Sciatic nerve (tissue), 2 donors: ENCODE measurements at regions of chr2 and their contacts with region 1.

Region 1: DNA sequence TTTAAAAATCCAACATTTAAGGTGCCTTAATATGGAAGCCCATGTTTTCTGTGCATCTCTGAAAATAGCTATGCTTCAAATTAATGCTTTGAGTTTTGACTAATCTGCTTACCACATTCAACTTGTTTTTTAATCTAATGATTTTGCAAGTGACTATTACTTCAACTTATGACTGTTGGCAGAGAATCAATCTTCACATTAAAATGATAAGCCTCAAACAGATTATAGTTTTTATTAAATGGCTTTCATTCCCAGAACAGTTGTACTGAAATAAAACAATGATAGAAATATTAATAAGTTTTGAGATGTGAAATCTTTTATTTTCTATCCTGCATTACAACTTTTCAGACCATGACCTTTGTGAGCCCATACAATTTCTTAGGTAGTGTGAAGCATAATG is 347.5 kb downstream of the ZNF804A start:
- DNase-seq: no peak
- ATAC-seq: no peak

Region 2: GRCh38 chr2:184927040-184927439 is 18.8 kb before region 1 on chr2:
- intact Hi-C with region 1: loop called (anchors 2 kb)
- DNase-seq: no peak
- ATAC-seq: no peak

Region 3: DNA sequence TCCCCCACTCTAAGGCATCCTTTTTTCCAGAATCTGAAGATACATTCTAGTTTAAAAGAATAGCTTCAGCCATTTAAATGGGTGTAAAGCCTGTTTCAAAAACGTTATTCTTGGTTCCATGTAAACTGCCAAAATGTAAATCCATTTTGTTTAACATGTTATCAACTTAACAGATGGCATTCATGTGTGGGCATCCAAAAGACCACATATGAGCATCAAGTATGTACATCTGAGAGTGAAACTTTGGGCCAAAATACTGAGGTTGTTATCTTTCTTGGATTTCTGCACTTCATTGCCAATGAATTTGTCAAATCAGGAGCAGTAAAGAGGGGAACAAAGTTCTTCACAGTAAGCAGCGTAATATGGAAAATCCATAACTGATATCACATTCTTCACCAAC is 47.9 kb after region 1 on chr2:
- intact Hi-C with region 1: no loop called
- DNase-seq: no peak
- ATAC-seq: no peak